ENCODE measurements at regions of chr16 and their contacts with region 1.

Region 1: DNA sequence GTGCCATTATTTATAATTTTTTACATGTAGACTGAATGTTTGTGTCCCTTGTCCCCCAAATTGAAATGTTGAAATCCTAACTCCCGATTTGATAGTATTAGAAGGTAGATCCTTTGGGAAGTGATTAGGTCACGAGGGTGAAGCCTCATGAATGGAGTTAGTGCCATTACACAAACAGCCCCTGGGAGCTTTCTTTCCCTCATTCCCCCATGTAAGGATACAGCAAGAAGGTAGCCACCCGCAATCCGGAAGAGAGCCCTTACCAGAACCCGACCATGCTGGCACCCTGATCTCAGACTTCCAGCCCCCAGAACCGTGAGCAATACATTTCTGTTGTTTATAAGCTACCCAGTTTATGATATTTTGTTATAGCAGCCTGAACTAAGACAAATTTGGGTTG is 143.2 kb downstream of the NPIPB5 start:
- DNase-seq: no peak
- ATAC-seq: no peak
- H3K4me3 ChIP-seq: no peak overlapping the region
- H3K27ac ChIP-seq: no peak overlapping the region
- H3K4me1 ChIP-seq: no peaks in the 10 kb centered on the region
- H3K27me3 ChIP-seq: peaks cover 4% of the 10 kb centered on the region
- CTCF ChIP-seq: no peak
- POLR2A ChIP-seq: no peak
- RAD21 ChIP-seq: no peak

Region 2: DNA sequence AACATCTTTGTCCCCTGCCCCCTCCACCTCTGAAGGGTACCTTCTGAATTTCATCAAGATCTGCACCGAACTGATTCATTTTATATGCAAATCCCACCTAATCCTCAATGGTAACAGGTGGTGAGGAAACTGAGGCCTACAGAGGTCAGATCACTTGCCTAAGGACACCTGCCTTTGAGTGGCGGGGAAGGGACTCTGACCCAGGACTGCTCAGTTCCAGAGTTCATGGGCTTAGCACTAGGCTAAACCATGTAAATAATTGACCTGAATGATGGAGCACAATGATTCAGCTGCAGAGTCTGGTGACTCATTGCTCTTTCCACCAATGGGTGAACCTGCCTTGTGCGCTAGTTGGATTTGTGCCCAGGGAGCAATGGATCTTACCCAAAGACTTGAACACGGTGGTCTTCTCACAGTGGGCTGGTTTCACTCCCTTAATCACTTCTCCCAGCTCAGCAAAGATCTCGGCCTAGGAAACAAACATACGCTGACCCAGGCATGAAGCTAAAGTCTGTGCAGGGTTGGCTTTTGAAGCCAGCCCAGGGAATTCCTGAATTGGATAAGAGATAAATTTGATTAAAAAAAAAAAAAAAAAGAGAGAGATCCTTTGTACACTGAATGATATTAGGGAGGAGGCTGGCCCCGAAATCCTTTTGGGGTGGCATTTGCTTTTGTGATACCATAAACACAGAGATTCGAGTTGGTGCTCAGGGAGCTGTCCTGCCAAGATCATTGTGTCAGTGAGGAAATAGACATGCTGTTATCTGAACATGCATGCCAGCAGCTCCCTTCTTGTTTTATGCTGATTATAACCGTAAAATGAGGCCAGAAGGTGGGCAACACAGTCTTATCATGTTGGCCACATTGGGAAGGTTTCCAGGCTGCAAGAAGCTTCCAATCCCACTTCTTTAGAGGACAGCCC is 1392.7 kb before region 1 on chr16:
- CTCF ChIA-PET with region 1: no interaction called
- POLR2A ChIA-PET with region 1: no interaction called
- dilution Hi-C with region 1: no loop called
- in situ Hi-C with region 1: no loop called
- intact Hi-C with region 1: loop called (anchors 5 kb)
- DNase-seq: peak; percentile 94
- ATAC-seq: peak; percentile 97
- H3K4me3 ChIP-seq: no peak overlapping the region
- H3K27ac ChIP-seq: no peak overlapping the region
- H3K4me1 ChIP-seq: no peaks in the 10 kb centered on the region; the same call in 1 of the 2 replicates
- H3K27me3 ChIP-seq: peaks cover 8% of the 10 kb centered on the region
- CTCF ChIP-seq: no peak
- POLR2A ChIP-seq: no peak
- RAD21 ChIP-seq: no peak

Region 3: DNA sequence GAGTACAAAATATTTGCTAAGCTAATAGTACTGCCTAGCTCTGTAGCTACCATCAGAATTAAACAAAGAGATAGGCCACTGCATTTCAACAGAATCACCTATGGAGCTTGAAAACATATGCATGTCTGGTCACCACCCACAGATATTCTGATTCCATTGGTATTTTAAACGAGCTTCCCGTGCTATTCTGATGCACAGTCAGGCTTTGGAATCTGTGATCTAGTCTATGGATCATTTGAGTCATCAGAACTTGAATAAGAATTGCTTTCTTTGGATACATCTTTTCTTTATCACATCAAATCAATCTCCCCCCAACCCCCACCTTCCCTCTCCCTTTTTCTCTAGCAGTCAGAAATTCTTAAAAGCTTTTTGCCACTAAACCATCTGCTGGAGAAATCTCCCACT is 18.5 kb before region 1 on chr16:
- CTCF ChIA-PET with region 1: no interaction called
- POLR2A ChIA-PET with region 1: no interaction called
- dilution Hi-C with region 1: no loop called
- in situ Hi-C with region 1: no loop called
- intact Hi-C with region 1: loop called (anchors 2 kb)
- DNase-seq: no peak
- ATAC-seq: no peak
- H3K4me3 ChIP-seq: no peak overlapping the region
- H3K27ac ChIP-seq: no peak overlapping the region
- H3K4me1 ChIP-seq: no peaks in the 10 kb centered on the region
- H3K27me3 ChIP-seq: peaks cover 12% of the 10 kb centered on the region
- CTCF ChIP-seq: no peak
- POLR2A ChIP-seq: no peak
- RAD21 ChIP-seq: no peak